ENCODE measurements at regions of chr9 and their contacts with region 1.

Region 1: DNA sequence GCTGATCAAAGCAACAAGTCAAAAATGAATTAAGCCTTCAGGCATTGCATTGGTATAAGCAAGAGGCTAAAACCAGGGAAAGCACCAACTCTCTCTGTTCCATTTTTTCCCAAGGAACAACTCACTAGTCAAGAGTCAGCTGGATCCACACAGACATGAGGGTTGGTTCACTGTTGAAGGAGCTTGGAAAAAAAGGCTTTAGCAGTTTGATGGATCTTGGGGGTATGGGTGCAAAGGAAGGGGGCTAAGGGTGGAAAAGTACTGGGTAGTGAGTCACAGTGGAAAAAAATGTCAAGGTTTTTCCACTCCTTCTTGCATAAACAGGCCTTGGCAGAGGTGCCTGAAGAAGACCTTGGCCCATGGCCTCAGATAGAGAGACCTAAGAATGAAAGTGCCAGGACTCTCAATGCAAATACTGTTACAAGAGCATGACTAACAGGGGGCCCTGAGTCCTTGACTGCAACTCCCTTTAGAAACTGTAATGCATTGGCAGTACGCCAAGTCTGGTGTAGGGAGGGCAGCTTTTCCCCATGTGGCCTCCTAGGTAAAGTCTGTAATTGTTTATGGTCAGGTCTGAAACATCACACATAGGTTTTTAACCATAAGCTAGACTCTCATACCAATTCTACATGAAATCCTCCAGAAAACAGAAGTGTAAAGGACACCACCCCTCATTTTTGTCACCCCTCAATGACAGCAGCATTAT is 23.7 kb downstream of the ACTL7A start:
- DNase-seq: peak; percentile 73
- H3K4me3 Mint-ChIP-seq: no peak overlapping the region
- H3K27ac Mint-ChIP-seq: peak overlapping the region; percentile 44
- H3K4me1 Mint-ChIP-seq: peaks cover 17% of the 10 kb centered on the region
- H3K27me3 Mint-ChIP-seq: no peaks in the 10 kb centered on the region

Region 2: DNA sequence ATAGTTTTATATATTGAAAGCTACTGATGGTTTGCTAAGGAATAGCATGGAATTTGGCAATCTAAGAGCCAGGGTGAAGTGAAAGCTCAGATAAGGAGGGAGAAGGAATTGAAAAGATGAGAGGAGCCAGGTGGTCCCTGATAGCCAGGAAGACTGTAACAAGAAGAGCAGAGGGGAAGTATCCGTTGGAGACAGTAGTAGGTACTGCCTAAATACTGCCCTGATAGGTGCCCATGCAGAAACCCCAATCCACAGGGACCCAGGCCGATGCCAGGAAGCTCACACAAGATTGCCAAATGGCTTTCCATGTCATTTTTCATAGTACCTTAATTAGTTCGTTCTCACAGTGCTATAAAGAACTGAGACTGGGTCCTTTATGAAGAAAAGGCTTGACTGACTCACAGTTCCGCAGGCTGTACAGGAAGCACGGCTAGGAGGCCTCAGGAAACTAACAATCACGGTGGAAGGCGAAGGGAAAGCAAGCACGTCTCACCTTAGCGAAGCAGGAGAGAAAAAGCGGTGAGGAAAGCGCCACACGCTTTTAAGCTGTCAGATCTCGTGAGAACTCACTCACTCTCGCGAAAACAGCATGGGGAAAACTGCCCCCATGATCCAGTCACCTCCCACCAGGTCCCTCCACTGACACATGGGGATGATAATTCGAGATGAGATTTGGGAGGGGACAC is 43.0 kb before region 1 on chr9:
- CTCF ChIA-PET with region 1: no interaction called
- POLR2A ChIA-PET with region 1: no interaction called
- intact Hi-C with region 1: no loop called
- DNase-seq: peak; percentile 45
- H3K4me3 Mint-ChIP-seq: peak overlapping the region; percentile 38
- H3K27ac Mint-ChIP-seq: no peak overlapping the region
- H3K4me1 Mint-ChIP-seq: peaks cover 4% of the 10 kb centered on the region
- H3K27me3 Mint-ChIP-seq: peaks cover 4% of the 10 kb centered on the region

Region 3: GRCh38 chr9:108913391-108913790 is 27.6 kb after region 1 on chr9:
- CTCF ChIA-PET with region 1: no interaction called
- POLR2A ChIA-PET with region 1: no interaction called
- intact Hi-C with region 1: no loop called
- DNase-seq: no peak
- H3K4me3 Mint-ChIP-seq: no peak overlapping the region
- H3K27ac Mint-ChIP-seq: no peak overlapping the region
- H3K4me1 Mint-ChIP-seq: peaks cover 16% of the 10 kb centered on the region
- H3K27me3 Mint-ChIP-seq: no peaks in the 10 kb centered on the region

Region 4: DNA sequence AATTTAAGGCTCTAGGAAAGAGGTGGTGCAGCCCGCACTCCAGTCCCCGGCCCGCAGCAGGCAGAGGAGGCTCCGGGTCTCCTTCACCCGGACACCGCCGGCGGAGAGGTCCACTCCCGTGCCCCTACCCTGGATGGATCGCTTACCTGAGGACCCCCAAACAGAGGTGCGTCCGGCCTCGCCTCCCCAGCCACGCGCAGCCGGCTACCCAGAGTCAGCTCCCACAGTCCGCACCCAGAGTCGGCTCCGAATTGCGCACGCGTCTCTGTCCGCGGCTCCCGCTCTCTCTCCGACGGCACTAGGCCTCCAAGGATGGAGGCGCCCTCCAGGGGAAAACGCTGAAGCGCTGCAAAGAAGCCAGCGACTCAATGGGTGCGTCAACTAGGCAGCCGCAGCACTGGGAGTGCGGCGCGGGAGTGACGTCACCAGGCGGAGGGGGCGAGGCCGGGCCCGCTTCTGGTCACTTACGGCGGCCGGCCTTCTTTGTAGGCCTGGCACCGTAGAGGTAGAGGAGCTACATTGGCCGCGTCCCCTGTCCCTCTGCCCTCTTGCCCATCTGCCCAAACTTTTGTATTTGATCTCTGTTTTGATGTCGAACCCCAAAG is 48.0 kb after region 1 on chr9 and contains the start of gene ELP1:
- CTCF ChIA-PET with region 1: no interaction called
- POLR2A ChIA-PET with region 1: no interaction called
- intact Hi-C with region 1: loop called (anchors 2 kb)
- DNase-seq: peak; percentile 95
- H3K4me3 Mint-ChIP-seq: peak within 1 kb of the TSS; percentile 95
- H3K27ac Mint-ChIP-seq: peak within 1 kb of the TSS; percentile 92
- H3K4me1 Mint-ChIP-seq: peaks cover 25% of the 10 kb centered on the region
- H3K27me3 Mint-ChIP-seq: no peaks in the 10 kb centered on the region
- total RNA-seq, gene ELP1: 25.5 to 29.2 TPM

Region 5: DNA sequence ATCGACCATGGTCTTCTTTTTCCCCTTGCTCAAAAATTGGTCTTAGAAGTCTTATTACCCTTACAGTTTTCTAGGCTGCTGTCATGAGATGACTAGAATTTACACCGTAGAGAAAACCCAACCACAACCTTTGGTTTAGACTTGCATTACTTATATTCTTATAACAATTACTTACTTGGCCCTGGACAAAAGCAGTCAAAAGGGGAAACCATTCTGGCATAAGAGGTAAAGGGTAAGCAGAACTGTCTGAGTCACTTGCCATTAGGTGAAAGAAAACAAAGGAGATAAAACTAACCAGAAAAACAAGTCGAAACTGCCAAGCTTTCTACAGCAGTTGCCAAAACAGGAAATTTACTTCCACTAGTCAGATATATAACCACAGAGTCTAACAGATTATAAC is 216.0 kb after region 1 on chr9:
- CTCF ChIA-PET with region 1: no interaction called
- POLR2A ChIA-PET with region 1: no interaction called
- intact Hi-C with region 1: loop called (anchors 5 kb)
- DNase-seq: no peak
- H3K4me3 Mint-ChIP-seq: peak overlapping the region; percentile 38
- H3K27ac Mint-ChIP-seq: peak overlapping the region; percentile 76
- H3K4me1 Mint-ChIP-seq: peaks cover 66% of the 10 kb centered on the region
- H3K27me3 Mint-ChIP-seq: no peaks in the 10 kb centered on the region

Region 6: GRCh38 chr9:109182940-109183798 is 297.4 kb after region 1 on chr9:
- CTCF ChIA-PET with region 1: interaction called, 4 read pairs
- POLR2A ChIA-PET with region 1: no interaction called
- intact Hi-C with region 1: loop called (anchors 1 kb)
- DNase-seq: peak; percentile 24
- H3K4me3 Mint-ChIP-seq: no peak overlapping the region
- H3K27ac Mint-ChIP-seq: no peak overlapping the region
- H3K4me1 Mint-ChIP-seq: peaks cover 11% of the 10 kb centered on the region
- H3K27me3 Mint-ChIP-seq: peaks cover 7% of the 10 kb centered on the region

Measured in activated CD4-positive, alpha-beta memory T cell treated with anti-CD3 and anti-CD28 coated beads for 36 hours (primary cell).